ENCODE measurements at regions of chr5 and their contacts with region 1.

Region 1: DNA sequence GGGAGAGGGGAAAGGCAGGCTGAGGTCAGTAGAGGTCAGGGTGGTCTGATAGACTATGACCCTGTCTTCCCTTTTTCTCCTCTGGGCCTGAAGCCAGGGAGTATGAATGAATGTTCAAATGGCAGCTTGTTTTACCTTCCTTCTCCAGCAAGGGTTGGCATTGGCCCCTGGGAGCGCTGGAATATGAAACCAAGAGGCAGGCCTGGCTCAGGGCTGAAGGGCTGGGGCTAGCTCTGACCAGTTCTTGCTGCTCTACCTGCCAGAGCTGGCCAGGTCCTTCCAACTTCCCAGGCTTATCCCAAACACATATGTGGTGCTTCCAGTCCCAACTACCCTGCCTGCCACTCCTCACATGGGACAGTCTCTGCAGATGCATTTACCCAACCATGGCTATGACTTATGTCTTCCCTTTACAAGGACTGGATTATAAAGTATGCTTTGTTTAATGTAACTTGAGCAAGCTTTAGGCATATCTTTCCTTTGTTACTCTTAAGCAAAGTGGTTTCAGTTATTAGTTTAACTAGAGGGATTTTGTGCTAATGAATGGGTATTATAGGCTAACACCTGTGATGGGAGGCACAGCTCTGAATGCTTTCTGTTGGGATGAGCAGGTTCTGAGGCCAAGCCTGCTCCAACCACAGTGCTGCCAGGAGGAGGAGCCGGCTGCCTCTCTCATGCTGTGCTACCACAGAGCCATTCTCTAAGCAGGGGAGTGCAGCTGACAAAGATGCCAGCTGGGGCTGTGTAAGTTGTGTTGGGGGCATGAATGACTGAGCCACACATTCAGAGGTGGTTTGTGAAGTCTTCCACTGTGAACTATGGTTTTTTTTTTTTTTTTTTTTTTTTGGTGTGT is 6.1 kb downstream of the CCNI2 start:
- DNase-seq: peak in 9 of 10 donors; percentile 58 to 96 (median 78)

Region 2: GRCh38 chr5:132655821-132656773 is 97.3 kb before region 1 on chr5:
- intact Hi-C with region 1: no loop called
- DNase-seq: peak in 5 of 10 donors; percentile 29 to 91 (median 80)

Region 3: GRCh38 chr5:132820162-132820754 is 66.9 kb after region 1 on chr5:
- intact Hi-C with region 1: loop called (anchors 2 kb)
- DNase-seq: peak; percentile 90 to 99 (median 98)

Measured in posterior cingulate gyrus (tissue), 11 donors.